ENCODE measurements at regions of chr7 and their contacts with region 1.

Region 1: DNA sequence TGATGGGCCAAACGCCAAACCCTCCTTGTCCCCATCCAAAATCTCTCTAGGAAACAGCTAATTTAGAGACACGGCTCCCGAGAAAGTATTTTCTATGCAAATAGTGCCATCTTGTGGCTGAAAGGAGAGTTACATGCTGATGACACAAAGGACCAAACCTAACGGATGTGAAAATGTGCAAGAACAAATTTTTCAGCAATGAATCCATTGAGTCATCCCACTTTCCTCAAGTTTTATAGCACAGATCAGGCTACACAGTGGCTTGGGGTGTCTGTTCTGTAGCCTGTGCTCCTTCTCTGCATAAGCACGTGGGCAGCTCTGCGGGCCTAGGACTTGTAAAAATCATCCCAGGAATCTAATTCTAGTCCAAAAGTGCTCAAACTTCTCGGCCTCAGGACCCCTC is 154.8 kb upstream of the PRR15 start:
- DNase-seq: peak; percentile 42 to 44
- H3K4me3 ChIP-seq: no peak overlapping the region
- H3K27ac ChIP-seq: no peak overlapping the region
- H3K4me1 ChIP-seq: no peaks in the 10 kb centered on the region
- H3K27me3 ChIP-seq: no peaks in the 10 kb centered on the region
- CTCF ChIP-seq: peak; percentile 62 to 95 (median 78)
- POLR2A ChIP-seq: no peak

Region 2: GRCh38 chr7:28921822-28922221 is 487.0 kb before region 1 on chr7:
- intact Hi-C with region 1: loop called (anchors 5 kb)
- DNase-seq: peak; percentile 36 to 37
- H3K4me3 ChIP-seq: no peak overlapping the region
- H3K27ac ChIP-seq: peak overlapping the region in 1 of 3 donors; percentile 11
- H3K4me1 ChIP-seq: peaks cover 7 to 10% of the 10 kb centered on the region in 2 donors
- H3K27me3 ChIP-seq: no peaks in the 10 kb centered on the region
- CTCF ChIP-seq: peak; percentile 86 to 92 (median 87)
- POLR2A ChIP-seq: no peak

Region 3: GRCh38 chr7:29189743-29190201 is 219.1 kb before region 1 on chr7:
- intact Hi-C with region 1: loop called (anchors 5 kb)
- DNase-seq: peak; percentile 61 to 74
- H3K4me3 ChIP-seq: no peak overlapping the region
- H3K27ac ChIP-seq: peak overlapping the region in 1 of 3 donors; percentile 29
- H3K4me1 ChIP-seq: peaks cover 6 to 10% of the 10 kb centered on the region in 2 donors
- H3K27me3 ChIP-seq: no peaks in the 10 kb centered on the region
- CTCF ChIP-seq: peak; percentile 59 to 91 (median 76)
- POLR2A ChIP-seq: no peak

Region 4: DNA sequence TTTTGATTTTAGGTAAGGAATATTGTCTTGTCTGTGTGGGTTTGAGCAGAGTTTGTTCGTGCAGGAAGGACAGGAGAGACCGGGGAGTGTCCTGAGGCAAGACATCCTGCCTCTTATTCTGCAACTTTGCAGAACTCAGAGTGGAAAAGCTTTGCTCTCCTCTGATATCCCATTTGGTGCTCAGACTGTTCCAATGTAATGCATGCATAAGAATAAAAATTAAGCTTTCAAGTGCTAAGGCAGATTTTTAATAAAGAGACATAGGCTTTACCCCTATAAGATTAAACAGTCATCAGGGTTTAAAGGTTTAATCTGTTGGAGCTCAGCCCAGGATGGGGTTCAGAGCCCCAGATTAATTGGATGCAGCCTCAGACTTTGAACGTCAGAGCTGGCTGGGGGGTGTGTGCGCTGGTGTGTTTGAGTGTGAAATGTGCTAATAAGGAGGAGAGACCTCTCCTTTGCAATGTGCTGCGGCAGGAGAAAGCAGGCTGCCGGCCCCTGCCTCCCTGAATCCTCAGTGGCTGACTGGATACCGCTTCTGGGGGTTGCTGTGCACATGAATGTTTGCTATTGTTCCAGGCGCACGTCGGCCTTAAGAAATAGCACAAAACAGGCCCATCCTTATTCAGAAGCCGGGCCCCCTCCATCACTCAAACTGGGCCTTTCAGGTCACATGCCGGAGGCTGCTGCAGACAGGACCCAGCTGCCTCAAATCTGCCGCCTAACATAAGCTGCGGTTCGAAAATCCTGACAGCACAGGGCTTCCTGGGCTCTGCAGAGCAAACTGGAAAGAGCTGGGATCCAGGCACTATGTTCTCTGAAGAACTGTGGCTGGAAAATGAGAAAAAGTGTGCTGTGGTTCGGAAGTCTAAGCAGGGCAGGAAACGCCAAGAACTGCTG is 70.7 kb after region 1 on chr7:
- intact Hi-C with region 1: no loop called
- DNase-seq: no peak
- H3K4me3 ChIP-seq: no peak overlapping the region
- H3K27ac ChIP-seq: peak overlapping the region in 2 of 3 donors; percentile 64 to 81
- H3K4me1 ChIP-seq: peaks cover 20 to 27% of the 10 kb centered on the region in 2 donors
- H3K27me3 ChIP-seq: no peaks in the 10 kb centered on the region
- CTCF ChIP-seq: no peak
- POLR2A ChIP-seq: no peak